Activated CD8-positive, alpha-beta memory T cell treated with anti-CD3 and anti-CD28 coated beads, Interleukin-2, amount 10 ng/mL, durations not matched to agents 7 days and 5 days (primary cell): ENCODE measurements at regions of chr7 and their contacts with region 1.

Region 1: DNA sequence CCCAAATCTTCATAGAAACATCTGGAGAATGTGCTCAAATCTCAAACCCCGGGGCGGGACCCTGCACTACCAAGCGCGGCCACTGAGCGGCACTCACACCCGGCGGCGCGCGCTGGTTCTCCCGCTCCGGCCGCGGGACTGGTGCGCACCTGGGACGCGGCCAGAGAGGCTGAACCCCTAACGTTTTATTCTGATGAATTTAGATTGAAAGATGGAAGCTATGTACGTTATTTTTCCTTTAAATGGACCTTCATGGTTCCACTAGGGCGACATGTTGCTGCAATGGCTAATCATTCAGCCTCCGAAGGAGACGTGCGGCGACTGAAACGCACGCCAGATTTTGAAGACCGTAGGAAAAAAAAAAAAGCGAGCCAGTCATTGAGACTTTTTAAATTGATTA is 107.0 kb upstream of the INSIG1 start:
- DNase-seq: peak; percentile 66
- ATAC-seq: peak; percentile 74
- H3K4me3 Mint-ChIP-seq: no peak overlapping the region
- H3K27ac Mint-ChIP-seq: no peak overlapping the region
- H3K4me1 Mint-ChIP-seq: peaks cover 46% of the 10 kb centered on the region
- H3K27me3 Mint-ChIP-seq: peaks cover 6% of the 10 kb centered on the region

Region 2: DNA sequence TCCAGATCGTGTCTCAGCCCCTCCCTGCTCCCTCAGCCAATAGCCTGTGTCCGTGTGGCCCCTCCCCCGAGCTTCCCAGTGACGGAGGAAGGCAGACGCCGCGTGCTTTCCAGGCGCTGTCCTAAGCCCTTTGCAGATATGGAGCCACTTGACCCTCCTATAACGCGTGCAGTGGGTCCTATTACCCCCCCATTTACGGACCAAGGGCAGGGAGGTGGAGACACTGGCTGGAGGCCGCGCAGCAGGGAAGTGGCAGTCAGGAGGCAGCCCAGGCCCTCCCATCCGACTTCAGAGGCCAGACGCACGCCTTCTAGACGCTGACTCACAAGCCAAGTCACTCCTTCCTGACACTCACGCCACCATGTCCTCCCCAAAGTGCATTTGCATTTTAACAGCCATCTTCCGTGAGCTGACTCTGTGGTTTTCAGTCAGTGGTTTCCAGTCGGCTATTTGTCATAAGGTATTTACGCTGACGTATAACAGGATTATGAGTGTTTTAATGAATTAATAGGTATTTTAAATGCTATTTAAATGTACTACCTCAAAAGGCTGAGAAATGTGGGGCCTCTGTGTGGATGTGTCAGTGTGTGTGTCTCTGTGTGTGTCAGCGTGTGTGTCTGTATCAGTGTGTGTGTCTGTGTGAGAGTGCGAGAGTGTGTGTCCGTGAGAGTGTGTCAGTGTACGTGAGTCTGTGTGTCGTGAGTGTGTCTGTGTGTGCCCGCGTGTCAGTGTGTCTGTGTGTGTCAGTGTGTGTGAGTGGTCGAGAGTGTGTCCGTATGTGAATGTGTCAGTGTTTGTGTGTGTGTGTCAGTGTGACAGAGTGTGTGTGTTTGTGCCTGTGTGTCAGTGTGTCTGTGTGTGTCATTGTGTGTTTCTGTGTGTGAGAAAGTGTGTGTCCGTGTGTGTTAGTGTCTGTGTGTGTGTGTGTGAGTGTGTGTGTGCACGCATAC is 15.0 kb after region 1 on chr7:
- CTCF ChIA-PET with region 1: interaction called, 12 read pairs
- DNase-seq: peak; percentile 97
- ATAC-seq: peak; percentile 91
- H3K4me3 Mint-ChIP-seq: peak overlapping the region; percentile 86
- H3K27ac Mint-ChIP-seq: peak overlapping the region; percentile 99
- H3K4me1 Mint-ChIP-seq: peaks cover 35% of the 10 kb centered on the region
- H3K27me3 Mint-ChIP-seq: no peaks in the 10 kb centered on the region